Activated CD4-positive, alpha-beta T cell treated with anti-CD3 and anti-CD28 coated beads for 36 hours (primary cell): ENCODE measurements at regions of chr19 and their contacts with region 1.

Region 1: GRCh38 chr19:12333162-12334159 is at the start of gene ZNF563:
- DNase-seq: peak; percentile 99
- ATAC-seq: peak; percentile 93
- H3K4me3 Mint-ChIP-seq: peak within 1 kb of the TSS; percentile 78
- H3K27ac Mint-ChIP-seq: peak within 1 kb of the TSS; percentile 98
- H3K4me1 Mint-ChIP-seq: peaks cover 32% of the 10 kb centered on the region
- H3K27me3 Mint-ChIP-seq: no peaks in the 10 kb centered on the region
- total RNA-seq, gene ZNF563: 6.6 to 6.7 TPM

Region 2: GRCh38 chr19:12162882-12163806 is 170.3 kb before region 1 on chr19 and contains the start of gene ZNF136:
- CTCF ChIA-PET with region 1: no interaction called
- POLR2A ChIA-PET with region 1: no interaction called
- intact Hi-C with region 1: loop called in 1 of 2 experiments (anchors 1 kb)
- DNase-seq: peak; percentile 97
- ATAC-seq: peak; percentile 100
- H3K4me3 Mint-ChIP-seq: peak within 1 kb of the TSS; percentile 98
- H3K27ac Mint-ChIP-seq: peak within 1 kb of the TSS; percentile 99
- H3K4me1 Mint-ChIP-seq: peaks cover 38% of the 10 kb centered on the region
- H3K27me3 Mint-ChIP-seq: no peaks in the 10 kb centered on the region
- total RNA-seq, gene ZNF136: 11.7 to 12.9 TPM

Region 3: GRCh38 chr19:12294249-12295158 is 39.0 kb before region 1 on chr19 and contains the start of gene ZNF44:
- CTCF ChIA-PET with region 1: interaction called, 6 read pairs
- POLR2A ChIA-PET with region 1: interaction called, 9 read pairs
- intact Hi-C with region 1: loop called (anchors 1 kb)
- DNase-seq: peak; percentile 98
- ATAC-seq: peak; percentile 98
- H3K4me3 Mint-ChIP-seq: peak within 1 kb of the TSS; percentile 98
- H3K27ac Mint-ChIP-seq: peak within 1 kb of the TSS; percentile 98
- H3K4me1 Mint-ChIP-seq: peaks cover 32% of the 10 kb centered on the region
- H3K27me3 Mint-ChIP-seq: no peaks in the 10 kb centered on the region
- total RNA-seq, gene ZNF44: 7.3 to 8.1 TPM

Region 4: GRCh38 chr19:12400633-12401502 is 67.4 kb after region 1 on chr19 and contains the start of gene ZNF799:
- CTCF ChIA-PET with region 1: no interaction called
- POLR2A ChIA-PET with region 1: interaction called, 5 read pairs
- intact Hi-C with region 1: loop called in 1 of 2 experiments (anchors 1 kb)
- DNase-seq: peak; percentile 94
- ATAC-seq: peak; percentile 96
- H3K4me3 Mint-ChIP-seq: peak within 1 kb of the TSS; percentile 86
- H3K27ac Mint-ChIP-seq: peak within 1 kb of the TSS; percentile 77
- H3K4me1 Mint-ChIP-seq: peaks cover 13% of the 10 kb centered on the region
- H3K27me3 Mint-ChIP-seq: no peaks in the 10 kb centered on the region
- total RNA-seq, gene ZNF799: 4.0 to 4.3 TPM

Region 5: GRCh38 chr19:12495002-12495802 is 161.7 kb after region 1 on chr19:
- CTCF ChIA-PET with region 1: no interaction called
- POLR2A ChIA-PET with region 1: no interaction called
- intact Hi-C with region 1: loop called in 1 of 2 experiments (anchors 1 kb)
- DNase-seq: peak; percentile 97
- ATAC-seq: peak; percentile 100
- H3K4me3 Mint-ChIP-seq: peak overlapping the region; percentile 75
- H3K27ac Mint-ChIP-seq: peak overlapping the region; percentile 71
- H3K4me1 Mint-ChIP-seq: peaks cover 7% of the 10 kb centered on the region
- H3K27me3 Mint-ChIP-seq: no peaks in the 10 kb centered on the region